Heart right ventricle (tissue), 16 donors: ENCODE measurements at regions of chr9 and their contacts with region 1.

Region 1: GRCh38 chr9:133356391-133357091 is at the starts of genes SURF1 and SURF2:
- DNase-seq: peak; percentile 88 to 90
- ATAC-seq: peak; percentile 86 to 97 (median 90)
- H3K4me3 ChIP-seq: peak within 1 kb of the TSS; percentile 58 to 97 (median 88)
- H3K27ac ChIP-seq: peak within 1 kb of the TSS; percentile 29 to 93 (median 82)
- H3K4me1 ChIP-seq: peaks cover 7 to 47% (median 31%) of the 10 kb centered on the region in 9 donors
- H3K27me3 ChIP-seq: no peaks in the 10 kb centered on the region
- CTCF ChIP-seq: peak in 1 of 9 donors; percentile 11
- total RNA-seq, gene SURF1: 41.7 to 75.0 (median 58.2) TPM
- total RNA-seq, gene SURF2: 9.7 to 16.0 (median 14.1) TPM

Region 2: DNA sequence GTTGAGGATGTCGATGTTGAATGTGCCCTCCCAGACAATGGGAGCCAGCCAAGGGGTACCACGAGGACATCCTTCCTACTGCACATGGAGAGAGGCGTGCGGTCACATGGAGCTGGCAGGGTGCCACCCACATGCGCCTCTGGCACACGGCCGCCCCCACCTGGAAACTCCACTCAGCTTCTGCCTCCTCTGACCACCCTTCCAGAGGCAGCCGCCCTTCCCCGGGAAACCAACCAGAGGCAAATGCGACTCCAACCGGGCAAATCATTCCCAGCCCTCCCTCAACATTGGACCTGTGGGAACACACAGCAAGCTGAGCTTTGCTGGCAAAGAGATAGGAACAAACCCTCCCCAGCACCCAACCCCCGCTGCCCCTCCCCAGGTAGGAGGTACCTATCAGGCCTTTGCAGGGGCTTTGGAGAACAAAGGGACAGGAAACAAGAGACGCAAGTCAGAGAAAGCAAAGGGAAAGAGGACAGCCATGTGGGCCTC is 99.0 kb before region 1 on chr9:
- intact Hi-C with region 1: no loop called
- DNase-seq: peak in 1 of 2 donors; percentile 68
- ATAC-seq: peak in 7 of 8 donors; percentile 47 to 87 (median 72)
- H3K4me3 ChIP-seq: no peak overlapping the region
- H3K27ac ChIP-seq: peak overlapping the region in 6 of 10 donors; percentile 44 to 88 (median 73)
- H3K4me1 ChIP-seq: peaks cover 0 to 42% (median 22%) of the 10 kb centered on the region in 9 donors
- H3K27me3 ChIP-seq: no peaks in the 10 kb centered on the region
- CTCF ChIP-seq: peak in 3 of 9 donors; percentile 25 to 49 (median 39)

Region 3: DNA sequence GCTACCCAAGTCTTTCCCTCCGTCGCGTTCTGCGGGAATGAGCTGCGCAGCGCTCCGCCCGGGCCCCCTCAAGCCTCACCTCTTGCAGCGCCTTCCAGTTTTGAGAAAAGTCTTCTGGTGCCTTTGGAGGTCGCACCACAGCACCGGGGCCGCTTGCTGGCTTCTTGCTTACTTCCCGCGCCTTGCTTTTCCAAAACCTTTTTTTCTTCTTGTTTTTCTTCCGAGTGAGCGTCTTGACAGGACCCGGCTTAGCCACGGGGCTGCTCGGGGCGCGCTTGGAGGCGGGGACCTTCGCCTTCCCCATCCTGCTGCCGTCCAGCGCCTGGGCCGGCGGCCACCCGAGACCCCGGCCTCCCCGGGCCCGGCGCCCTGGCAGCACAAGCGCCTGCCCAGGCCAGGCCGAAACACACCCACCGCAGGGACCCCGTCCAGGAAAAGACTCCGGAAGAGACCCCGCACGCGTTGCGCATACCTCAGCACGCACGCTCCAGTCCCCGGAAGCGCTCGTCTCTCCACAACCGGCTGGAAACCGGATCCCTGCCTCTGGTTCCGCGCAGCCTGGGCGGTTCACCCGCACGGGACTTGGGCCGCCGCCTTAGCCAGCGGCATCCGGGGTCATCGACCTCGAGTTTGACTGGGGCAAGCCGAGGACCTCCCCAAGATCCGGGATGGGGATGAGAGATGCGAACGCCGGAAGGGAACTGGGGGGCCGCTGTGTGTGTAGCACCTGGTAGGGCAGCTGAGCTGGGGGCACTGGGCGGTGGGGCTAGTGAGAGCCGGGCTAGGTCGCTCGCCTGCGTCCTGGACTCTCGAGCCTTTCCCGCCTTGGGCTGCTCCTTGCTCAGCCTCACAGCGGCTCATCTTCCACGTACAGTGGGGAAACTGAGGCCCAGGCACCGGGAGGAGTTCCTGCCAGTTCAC is 61.3 kb after region 1 on chr9 and contains the start of gene REXO4:
- intact Hi-C with region 1: loop called in 1 of 10 experiments (anchors 10 kb)
- DNase-seq: peak; percentile 77 to 83
- ATAC-seq: peak; percentile 92 to 97 (median 96)
- H3K4me3 ChIP-seq: peak within 1 kb of the TSS; percentile 51 to 94 (median 82)
- H3K27ac ChIP-seq: peak within 1 kb of the TSS; percentile 35 to 93 (median 82)
- H3K4me1 ChIP-seq: peaks cover 6 to 35% (median 19%) of the 10 kb centered on the region in 9 donors
- H3K27me3 ChIP-seq: no peaks in the 10 kb centered on the region
- CTCF ChIP-seq: no peak
- total RNA-seq, gene REXO4: 9.3 to 20.8 (median 10.9) TPM